ENCODE measurements at regions of chr19 and their contacts with region 1.

Region 1: GRCh38 chr19:48190288-48190884 is 19.9 kb downstream of the ZSWIM9 start:
- DNase-seq: peak; percentile 53
- ATAC-seq: peak; percentile 72
- H3K4me3 ChIP-seq: no peak overlapping the region
- H3K4me3 Mint-ChIP-seq: no peak overlapping the region
- H3K27ac ChIP-seq: no peak overlapping the region
- H3K27ac Mint-ChIP-seq: no peak overlapping the region
- H3K4me1 ChIP-seq: peaks cover 17 to 19% of the 10 kb centered on the region in 2 donors
- H3K4me1 Mint-ChIP-seq: peaks cover 28% of the 10 kb centered on the region
- H3K27me3 ChIP-seq: no peaks in the 10 kb centered on the region
- H3K27me3 Mint-ChIP-seq: no peaks in the 10 kb centered on the region
- CTCF ChIP-seq: peak; percentile 34

Region 2: DNA sequence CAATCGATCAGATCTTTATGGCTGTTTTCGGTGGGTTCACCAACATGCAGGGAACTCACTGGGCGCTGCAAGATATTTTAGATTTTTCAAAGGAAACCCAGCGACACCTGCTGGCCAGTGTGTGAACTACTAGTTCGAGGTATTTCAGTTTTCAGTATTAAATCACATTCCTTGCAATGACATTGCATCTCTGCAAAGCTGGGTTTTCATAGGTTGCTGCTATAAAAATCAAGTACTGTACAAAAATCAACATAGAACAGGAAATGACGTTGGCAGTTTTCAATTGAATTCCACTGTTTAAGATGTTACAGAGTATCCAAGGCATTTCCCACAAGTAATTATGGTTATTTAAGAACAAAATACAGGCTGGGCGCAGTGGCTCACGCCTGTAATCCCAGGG is 37.8 kb before region 1 on chr19:
- CTCF ChIA-PET with region 1: interaction called, 4 read pairs
- POLR2A ChIA-PET with region 1: no interaction called
- intact Hi-C with region 1: loop called (anchors 2 kb)
- DNase-seq: peak; percentile 75
- ATAC-seq: peak; percentile 54
- H3K4me3 ChIP-seq: no peak overlapping the region
- H3K4me3 Mint-ChIP-seq: no peak overlapping the region
- H3K27ac ChIP-seq: no peak overlapping the region
- H3K27ac Mint-ChIP-seq: no peak overlapping the region
- H3K4me1 ChIP-seq: no peaks in the 10 kb centered on the region
- H3K4me1 Mint-ChIP-seq: no peaks in the 10 kb centered on the region
- H3K27me3 ChIP-seq: no peaks in the 10 kb centered on the region
- H3K27me3 Mint-ChIP-seq: no peaks in the 10 kb centered on the region
- CTCF ChIP-seq: peak; percentile 92

Region 3: DNA sequence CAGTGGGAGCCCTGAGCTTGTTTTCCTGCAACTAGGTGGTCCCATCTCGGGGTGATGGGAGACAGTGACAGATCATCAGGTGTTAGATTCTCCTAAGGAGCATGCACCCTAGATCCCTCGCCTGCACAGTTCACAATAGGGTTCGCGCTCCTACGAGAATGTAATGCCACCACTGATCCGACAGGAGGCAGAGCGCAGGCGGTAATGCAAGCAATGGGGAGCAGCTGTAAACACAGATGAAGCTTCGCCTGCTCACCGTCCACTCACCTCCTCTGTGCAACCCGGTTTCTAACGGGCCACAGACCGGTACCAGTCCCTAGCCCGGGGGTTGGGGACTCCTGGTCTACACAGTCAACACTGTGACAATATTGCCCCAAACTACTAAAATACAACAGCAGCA is 26.5 kb after region 1 on chr19:
- CTCF ChIA-PET with region 1: no interaction called
- POLR2A ChIA-PET with region 1: no interaction called
- intact Hi-C with region 1: no loop called
- DNase-seq: no peak
- ATAC-seq: no peak
- H3K4me3 ChIP-seq: no peak overlapping the region
- H3K4me3 Mint-ChIP-seq: no peak overlapping the region
- H3K27ac ChIP-seq: no peak overlapping the region
- H3K27ac Mint-ChIP-seq: no peak overlapping the region
- H3K4me1 ChIP-seq: no peaks in the 10 kb centered on the region
- H3K4me1 Mint-ChIP-seq: no peaks in the 10 kb centered on the region
- H3K27me3 ChIP-seq: no peaks in the 10 kb centered on the region
- H3K27me3 Mint-ChIP-seq: no peaks in the 10 kb centered on the region
- CTCF ChIP-seq: no peak

Region 4: DNA sequence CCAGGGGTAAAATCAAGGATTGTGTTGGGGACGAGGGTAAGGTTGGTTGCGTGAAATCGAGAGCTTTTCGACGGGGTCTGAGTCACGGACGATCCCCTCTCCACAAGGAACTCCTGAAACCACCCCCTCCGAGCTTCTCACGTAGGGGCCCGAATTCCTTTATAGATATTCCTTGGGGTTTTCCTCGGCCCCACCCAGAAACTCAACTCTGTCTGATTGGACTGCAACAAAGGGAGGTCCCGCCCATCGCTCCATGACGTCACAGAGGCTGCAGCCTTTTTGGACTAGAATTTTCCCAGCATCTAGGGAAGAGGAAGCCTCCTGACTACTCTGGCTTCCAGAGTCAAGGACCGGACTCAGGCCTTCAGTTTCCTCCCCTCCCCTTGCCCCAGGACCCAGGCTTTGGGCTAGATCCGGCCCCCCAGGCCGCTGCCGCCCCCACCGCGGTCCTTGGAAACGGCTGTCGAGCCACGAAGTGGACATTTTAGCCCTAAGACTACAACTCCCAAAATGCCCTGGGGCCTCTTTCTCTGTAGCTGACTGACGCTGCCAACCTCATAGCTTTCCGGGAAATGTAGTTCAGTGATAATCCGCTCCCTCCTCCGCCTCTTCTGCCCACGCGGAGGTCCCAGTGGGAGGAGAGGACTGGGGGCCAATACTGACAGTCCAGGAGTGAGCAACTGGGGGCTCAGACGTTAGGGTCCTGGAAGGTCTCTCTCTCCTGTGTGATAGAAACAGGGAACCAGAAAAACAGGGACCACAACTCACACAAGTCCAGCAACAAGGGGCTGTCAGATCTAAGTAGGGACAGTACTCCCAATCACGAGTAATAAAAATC is 556.6 kb after region 1 on chr19 and contains the start of gene IZUMO1:
- CTCF ChIA-PET with region 1: no interaction called
- POLR2A ChIA-PET with region 1: no interaction called
- intact Hi-C with region 1: no loop called
- DNase-seq: peak; percentile 64
- ATAC-seq: peak; percentile 72
- H3K4me3 ChIP-seq: peak within 1 kb of the TSS in 2 of 5 experiments; percentile 19 to 20
- H3K4me3 Mint-ChIP-seq: no peak within 1 kb of the TSS
- H3K27ac ChIP-seq: no peak within 1 kb of the TSS
- H3K27ac Mint-ChIP-seq: peak within 1 kb of the TSS; percentile 10
- H3K4me1 ChIP-seq: peaks cover 11 to 14% of the 10 kb centered on the region in 2 donors
- H3K4me1 Mint-ChIP-seq: peaks cover 14% of the 10 kb centered on the region
- H3K27me3 ChIP-seq: peaks cover 0 to 57% (median 19%) of the 10 kb centered on the region in 4 experiments
- H3K27me3 Mint-ChIP-seq: peaks cover 33% of the 10 kb centered on the region
- CTCF ChIP-seq: no peak
- total RNA-seq, gene IZUMO1: not detected in 2 replicates